GM12878 (cell line): ENCODE measurements at regions of chr11 and their contacts with region 1.

Region 1: GRCh38 chr11:86015699-86016098 is 53.2 kb downstream of the PICALM start:
- DNase-seq: no peak
- ATAC-seq: no peak
- H3K4me3 ChIP-seq: no peak overlapping the region
- H3K27ac ChIP-seq: peak overlapping the region; percentile 5; the same call in 1 of the 2 replicates
- H3K4me1 ChIP-seq: peaks cover 3% of the 10 kb centered on the region; the same call in 1 of the 2 replicates
- H3K27me3 ChIP-seq: no peaks in the 10 kb centered on the region
- CTCF ChIP-seq: no peak
- EP300 ChIP-seq: no peak
- POLR2A ChIP-seq: no peak
- RAD21 ChIP-seq: no peak

Region 2: GRCh38 chr11:85930879-85931366 is 84.8 kb before region 1 on chr11:
- CTCF ChIA-PET with region 1: no interaction called
- POLR2A ChIA-PET with region 1: no interaction called
- RAD21 ChIA-PET with region 1: no interaction called
- SMC1A ChIA-PET with region 1: no interaction called
- in situ Hi-C with region 1: no loop called
- intact Hi-C with region 1: no loop called
- DNase-seq: no peak
- ATAC-seq: no peak
- H3K4me3 ChIP-seq: no peak overlapping the region
- H3K27ac ChIP-seq: no peak overlapping the region
- H3K4me1 ChIP-seq: no peaks in the 10 kb centered on the region
- H3K27me3 ChIP-seq: no peaks in the 10 kb centered on the region
- CTCF ChIP-seq: no peak
- EP300 ChIP-seq: no peak
- POLR2A ChIP-seq: no peak
- RAD21 ChIP-seq: no peak

Region 3: DNA sequence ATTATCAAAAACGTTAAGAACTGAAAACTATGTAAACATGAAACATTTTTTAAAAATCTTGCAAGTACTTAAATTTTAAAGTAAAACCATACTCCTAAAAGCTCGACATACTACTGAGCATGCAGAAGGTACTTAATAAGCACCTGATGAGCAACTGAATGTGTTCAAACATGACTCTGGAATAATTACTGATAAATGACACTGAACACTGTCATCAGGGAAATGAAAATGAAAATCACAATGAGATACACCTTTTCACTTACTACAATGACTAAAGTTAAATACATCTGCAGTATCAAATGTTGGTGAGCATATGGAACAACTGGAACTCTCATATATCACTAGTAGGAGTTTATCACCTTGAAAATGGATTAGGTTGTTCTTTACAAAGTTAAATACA is 12.0 kb before region 1 on chr11:
- CTCF ChIA-PET with region 1: interaction called, 6 read pairs
- POLR2A ChIA-PET with region 1: interaction called, 4 read pairs
- RAD21 ChIA-PET with region 1: interaction called, 4 read pairs
- SMC1A ChIA-PET with region 1: interaction called, 10 read pairs
- in situ Hi-C with region 1: no loop called
- intact Hi-C with region 1: no loop called
- DNase-seq: no peak
- ATAC-seq: no peak
- H3K4me3 ChIP-seq: no peak overlapping the region
- H3K27ac ChIP-seq: no peak overlapping the region
- H3K4me1 ChIP-seq: no peaks in the 10 kb centered on the region
- H3K27me3 ChIP-seq: no peaks in the 10 kb centered on the region
- CTCF ChIP-seq: no peak
- EP300 ChIP-seq: no peak
- POLR2A ChIP-seq: no peak
- RAD21 ChIP-seq: no peak

Region 4: DNA sequence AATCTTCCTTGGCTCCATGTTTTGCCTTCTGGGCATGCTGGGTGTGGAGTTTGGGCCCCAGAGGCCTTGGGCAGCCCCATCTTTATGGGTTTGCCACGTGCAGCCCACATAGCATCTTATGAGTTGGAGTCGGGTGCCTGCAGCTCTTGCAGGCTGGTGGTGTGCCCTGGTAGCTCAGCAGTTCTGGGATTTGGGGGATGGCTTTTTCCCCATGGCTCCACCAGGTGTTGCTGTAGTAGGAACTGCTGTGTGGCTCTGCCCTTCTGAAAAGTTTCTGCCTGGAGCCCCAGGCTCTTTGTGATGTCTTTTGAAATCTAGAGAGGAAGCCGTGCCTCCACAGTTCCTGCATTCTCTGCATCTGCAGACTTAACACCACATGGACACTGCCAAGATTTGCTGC is 245.6 kb after region 1 on chr11:
- CTCF ChIA-PET with region 1: no interaction called
- POLR2A ChIA-PET with region 1: interaction called, 10 read pairs
- RAD21 ChIA-PET with region 1: no interaction called
- SMC1A ChIA-PET with region 1: no interaction called
- in situ Hi-C with region 1: no loop called
- intact Hi-C with region 1: no loop called
- DNase-seq: no peak
- ATAC-seq: peak; percentile 10
- H3K4me3 ChIP-seq: no peak overlapping the region
- H3K27ac ChIP-seq: no peak overlapping the region
- H3K4me1 ChIP-seq: peaks cover 3% of the 10 kb centered on the region; the same call in 1 of the 2 replicates
- H3K27me3 ChIP-seq: no peaks in the 10 kb centered on the region
- CTCF ChIP-seq: peak in 1 of 3 experiments; percentile 1; a peak in 1 of 6 replicates
- EP300 ChIP-seq: no peak
- POLR2A ChIP-seq: 0 out of 2 replicates have a peak, but pooled peaks have one; percentile 29
- RAD21 ChIP-seq: no peak